ENCODE measurements at regions of chr3 and their contacts with region 1.

Region 1: GRCh38 chr3:37855363-37855970 is 6.2 kb upstream of the CTDSPL start:
- DNase-seq: peak; percentile 41 to 85 (median 70)
- ATAC-seq: peak; percentile 57
- H3K4me3 ChIP-seq: no peak overlapping the region
- H3K4me3 Mint-ChIP-seq: no peak overlapping the region
- H3K27ac ChIP-seq: no peak overlapping the region
- H3K27ac Mint-ChIP-seq: no peak overlapping the region
- H3K4me1 ChIP-seq: peaks cover 8% of the 10 kb centered on the region
- H3K4me1 Mint-ChIP-seq: peaks cover 3% of the 10 kb centered on the region
- H3K27me3 ChIP-seq: no peaks in the 10 kb centered on the region
- H3K27me3 Mint-ChIP-seq: peaks cover 5% of the 10 kb centered on the region
- CTCF ChIP-seq: peak; percentile 86

Region 2: DNA sequence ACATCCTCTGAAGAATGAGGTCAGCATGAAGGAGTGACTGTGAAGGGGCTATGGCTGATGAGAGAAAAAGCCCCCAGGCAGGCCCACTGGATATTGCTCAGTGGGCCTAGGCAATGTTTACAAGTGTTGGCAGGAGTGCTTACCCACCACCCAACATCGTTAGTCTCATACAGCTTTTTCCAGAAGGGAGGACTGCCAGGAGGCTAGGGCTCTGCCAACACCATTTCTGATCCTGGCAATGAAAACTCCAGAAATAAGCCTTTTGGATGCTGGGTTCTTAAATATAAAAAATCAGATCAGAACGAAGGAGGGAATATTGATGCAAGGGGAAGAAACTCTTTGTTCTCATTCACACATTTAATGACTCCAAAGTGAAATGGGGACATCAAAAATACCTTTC is 1280.2 kb before region 1 on chr3:
- CTCF ChIA-PET with region 1: no interaction called
- POLR2A ChIA-PET with region 1: no interaction called
- intact Hi-C with region 1: no loop called
- DNase-seq: no peak
- ATAC-seq: no peak
- H3K4me3 ChIP-seq: no peak overlapping the region
- H3K4me3 Mint-ChIP-seq: no peak overlapping the region
- H3K27ac ChIP-seq: no peak overlapping the region
- H3K27ac Mint-ChIP-seq: no peak overlapping the region
- H3K4me1 ChIP-seq: no peaks in the 10 kb centered on the region
- H3K4me1 Mint-ChIP-seq: no peaks in the 10 kb centered on the region
- H3K27me3 ChIP-seq: no peaks in the 10 kb centered on the region
- H3K27me3 Mint-ChIP-seq: no peaks in the 10 kb centered on the region
- CTCF ChIP-seq: no peak

Region 3: DNA sequence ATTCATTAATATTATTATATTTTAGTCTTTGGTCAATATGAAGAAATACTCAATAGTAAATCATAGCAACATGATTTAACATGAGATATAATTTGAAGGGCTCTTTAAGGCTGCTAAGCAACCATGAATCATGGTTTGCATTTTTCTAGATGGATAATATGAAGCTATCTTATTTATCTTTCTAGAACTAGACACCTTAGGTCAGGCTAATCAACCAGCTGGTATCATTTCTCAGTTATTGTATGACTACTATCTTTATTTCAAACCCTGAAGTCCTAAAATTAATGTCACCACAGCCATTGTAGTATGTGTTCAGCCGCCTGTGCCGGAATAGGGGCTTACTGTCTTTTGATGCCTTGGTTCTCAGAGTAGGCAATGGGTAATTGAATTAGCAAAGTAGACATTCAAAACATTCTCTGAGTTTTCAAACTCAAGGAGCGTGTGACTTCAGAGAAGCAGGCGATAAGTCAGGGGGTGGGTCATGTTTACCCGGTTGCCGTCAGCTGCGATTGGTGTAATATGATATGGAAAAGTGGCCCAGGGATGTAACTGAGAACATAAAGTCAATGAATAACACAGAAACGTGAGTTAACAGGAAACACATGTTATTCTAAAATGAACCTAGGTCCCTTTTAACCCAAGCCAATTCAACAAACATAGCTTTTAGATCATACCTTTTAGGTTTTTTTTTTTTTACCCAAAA is 87.2 kb before region 1 on chr3:
- CTCF ChIA-PET with region 1: no interaction called
- POLR2A ChIA-PET with region 1: no interaction called
- intact Hi-C with region 1: no loop called
- DNase-seq: no peak
- ATAC-seq: no peak
- H3K4me3 ChIP-seq: no peak overlapping the region
- H3K4me3 Mint-ChIP-seq: no peak overlapping the region
- H3K27ac ChIP-seq: no peak overlapping the region
- H3K27ac Mint-ChIP-seq: no peak overlapping the region
- H3K4me1 ChIP-seq: no peaks in the 10 kb centered on the region
- H3K4me1 Mint-ChIP-seq: peaks cover 3% of the 10 kb centered on the region
- H3K27me3 ChIP-seq: no peaks in the 10 kb centered on the region
- H3K27me3 Mint-ChIP-seq: peaks cover 17% of the 10 kb centered on the region
- CTCF ChIP-seq: no peak

Region 4: GRCh38 chr3:37872413-37873160 is 17.1 kb after region 1 on chr3:
- CTCF ChIA-PET with region 1: interaction called, 18 read pairs
- POLR2A ChIA-PET with region 1: no interaction called
- intact Hi-C with region 1: no loop called
- DNase-seq: no peak
- ATAC-seq: no peak
- H3K4me3 ChIP-seq: no peak overlapping the region
- H3K4me3 Mint-ChIP-seq: no peak overlapping the region
- H3K27ac ChIP-seq: no peak overlapping the region
- H3K27ac Mint-ChIP-seq: no peak overlapping the region
- H3K4me1 ChIP-seq: no peaks in the 10 kb centered on the region
- H3K4me1 Mint-ChIP-seq: no peaks in the 10 kb centered on the region
- H3K27me3 ChIP-seq: no peaks in the 10 kb centered on the region
- H3K27me3 Mint-ChIP-seq: peaks cover 5% of the 10 kb centered on the region
- CTCF ChIP-seq: no peak

Region 5: DNA sequence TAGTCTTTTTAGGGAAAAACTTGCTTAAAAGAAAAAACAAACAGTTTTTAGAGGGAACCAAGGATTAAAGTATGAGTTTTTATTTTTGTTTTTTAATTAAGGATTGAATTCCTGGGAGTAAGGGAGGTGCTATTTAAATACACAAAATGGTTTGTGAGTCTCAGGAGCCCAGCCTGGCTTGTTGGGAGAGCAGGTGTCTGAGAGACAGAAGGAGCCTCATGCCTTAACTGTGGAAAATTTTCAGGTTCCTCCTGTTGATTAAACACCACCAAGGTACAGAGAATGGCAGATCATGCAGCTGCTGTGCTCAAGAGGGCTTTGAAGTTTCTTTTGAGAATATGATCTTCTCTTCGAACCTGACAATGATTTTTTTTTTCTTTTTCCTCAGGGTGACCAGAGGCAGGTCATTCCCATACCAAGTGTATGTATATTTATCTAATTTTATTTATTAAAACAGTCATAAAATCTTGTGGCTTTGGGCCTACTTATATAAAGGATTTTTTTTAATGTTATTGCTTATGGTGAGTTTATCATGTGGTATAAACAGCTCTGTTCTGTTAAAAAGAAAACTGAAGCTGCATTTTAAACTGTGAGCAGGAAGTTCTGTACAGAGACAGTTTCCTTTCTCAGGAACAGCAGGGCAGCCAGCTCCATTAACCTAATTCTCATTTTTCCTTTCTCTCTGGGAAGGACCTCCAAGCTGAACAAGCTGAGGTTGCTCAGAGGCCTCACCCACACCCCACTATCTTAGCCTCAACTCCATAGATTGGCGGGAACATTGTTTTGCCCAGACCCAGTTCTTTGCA is 101.5 kb after region 1 on chr3:
- CTCF ChIA-PET with region 1: interaction called, 15 read pairs
- POLR2A ChIA-PET with region 1: no interaction called
- intact Hi-C with region 1: no loop called
- DNase-seq: peak in 1 of 9 experiments; percentile 23
- ATAC-seq: no peak
- H3K4me3 ChIP-seq: no peak overlapping the region
- H3K4me3 Mint-ChIP-seq: peak overlapping the region; percentile 52
- H3K27ac ChIP-seq: peak overlapping the region; percentile 34 to 50
- H3K27ac Mint-ChIP-seq: peak overlapping the region; percentile 93
- H3K4me1 ChIP-seq: peaks cover 23% of the 10 kb centered on the region
- H3K4me1 Mint-ChIP-seq: peaks cover 27% of the 10 kb centered on the region
- H3K27me3 ChIP-seq: no peaks in the 10 kb centered on the region
- H3K27me3 Mint-ChIP-seq: no peaks in the 10 kb centered on the region
- CTCF ChIP-seq: no peak

Region 6: DNA sequence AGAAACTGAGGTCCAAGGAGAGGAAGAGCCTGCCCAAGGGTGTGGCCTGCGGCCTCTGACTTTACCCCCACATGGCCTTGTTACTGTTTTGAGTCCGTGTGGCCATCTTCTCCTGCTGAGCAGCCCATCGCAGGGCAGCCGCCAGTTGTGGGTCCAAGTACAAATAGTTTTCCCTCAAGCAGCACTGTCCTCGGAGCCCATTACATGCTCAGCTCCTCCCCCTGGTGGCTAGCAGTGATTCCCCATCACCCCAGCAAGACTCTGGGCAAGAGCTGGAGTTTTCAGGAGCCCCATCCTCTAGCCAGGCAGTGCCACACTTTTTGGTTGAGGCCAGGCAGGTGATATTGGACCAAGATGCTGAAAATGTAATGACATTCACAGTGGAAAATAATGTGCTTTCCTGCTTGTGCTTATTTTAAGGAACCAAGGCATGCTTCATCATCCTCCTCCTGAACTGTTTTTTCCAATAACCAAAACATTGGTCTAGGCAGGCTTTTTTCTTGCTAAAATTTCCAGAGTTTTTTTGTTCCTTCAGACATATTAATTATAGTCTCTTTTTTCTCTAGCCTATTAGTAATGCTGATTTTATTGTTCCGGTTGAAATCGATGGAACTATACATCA is 111.9 kb after region 1 on chr3:
- CTCF ChIA-PET with region 1: no interaction called
- POLR2A ChIA-PET with region 1: no interaction called
- intact Hi-C with region 1: loop called in 1 of 2 experiments (anchors 1 kb)
- DNase-seq: peak in 8 of 9 experiments; percentile 20 to 70 (median 59)
- ATAC-seq: peak; percentile 83
- H3K4me3 ChIP-seq: no peak overlapping the region
- H3K4me3 Mint-ChIP-seq: no peak overlapping the region
- H3K27ac ChIP-seq: no peak overlapping the region
- H3K27ac Mint-ChIP-seq: no peak overlapping the region
- H3K4me1 ChIP-seq: no peaks in the 10 kb centered on the region
- H3K4me1 Mint-ChIP-seq: peaks cover 3% of the 10 kb centered on the region
- H3K27me3 ChIP-seq: no peaks in the 10 kb centered on the region
- H3K27me3 Mint-ChIP-seq: no peaks in the 10 kb centered on the region
- CTCF ChIP-seq: peak; percentile 63